Panc1 (cell line): ENCODE measurements at regions of chr4 and their contacts with region 1.

Region 1: GRCh38 chr4:181819946-181820345 is 423.3 kb upstream of the TENM3 start:
- DNase-seq: no peak
- ATAC-seq: no peak
- H3K4me3 ChIP-seq: no peak overlapping the region
- H3K27ac ChIP-seq: no peak overlapping the region
- H3K4me1 ChIP-seq: no peaks in the 10 kb centered on the region
- H3K27me3 ChIP-seq: no peaks in the 10 kb centered on the region
- CTCF ChIP-seq: no peak

Region 2: DNA sequence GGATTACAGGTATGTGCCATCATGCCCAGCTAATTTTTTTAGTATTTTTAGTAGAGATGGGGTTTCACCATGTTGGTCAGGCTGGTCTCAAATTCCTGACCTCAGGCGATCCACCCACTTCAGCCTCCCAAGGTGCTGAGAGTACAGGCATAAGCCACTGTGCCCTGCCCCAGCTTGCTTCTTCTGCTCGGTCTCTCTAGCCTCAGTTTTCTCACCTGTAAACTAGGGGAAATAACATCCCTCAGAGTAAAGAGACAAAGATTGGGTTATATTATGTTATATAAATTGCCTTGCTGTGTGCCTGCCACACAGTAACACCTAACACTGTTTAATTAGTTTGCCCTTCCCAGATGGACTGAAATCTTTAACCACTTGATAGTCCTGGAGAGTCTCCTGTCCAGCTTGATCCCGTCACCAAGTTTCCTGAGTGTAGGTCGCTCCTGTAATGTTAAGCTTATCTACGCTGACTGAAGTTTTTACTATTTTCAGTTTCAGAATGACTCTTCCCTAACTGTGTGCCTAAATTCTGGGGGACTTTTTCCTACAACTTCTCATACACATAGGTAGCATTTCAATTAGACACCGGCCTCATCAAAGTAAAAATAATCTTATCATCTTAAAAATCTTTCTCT is 10.6 kb after region 1 on chr4:
- CTCF ChIA-PET with region 1: no interaction called
- POLR2A ChIA-PET with region 1: no interaction called
- in situ Hi-C with region 1: no loop called
- intact Hi-C with region 1: no loop called
- DNase-seq: no peak
- ATAC-seq: no peak
- H3K4me3 ChIP-seq: no peak overlapping the region
- H3K27ac ChIP-seq: no peak overlapping the region
- H3K4me1 ChIP-seq: no peaks in the 10 kb centered on the region
- H3K27me3 ChIP-seq: no peaks in the 10 kb centered on the region
- CTCF ChIP-seq: no peak

Region 3: DNA sequence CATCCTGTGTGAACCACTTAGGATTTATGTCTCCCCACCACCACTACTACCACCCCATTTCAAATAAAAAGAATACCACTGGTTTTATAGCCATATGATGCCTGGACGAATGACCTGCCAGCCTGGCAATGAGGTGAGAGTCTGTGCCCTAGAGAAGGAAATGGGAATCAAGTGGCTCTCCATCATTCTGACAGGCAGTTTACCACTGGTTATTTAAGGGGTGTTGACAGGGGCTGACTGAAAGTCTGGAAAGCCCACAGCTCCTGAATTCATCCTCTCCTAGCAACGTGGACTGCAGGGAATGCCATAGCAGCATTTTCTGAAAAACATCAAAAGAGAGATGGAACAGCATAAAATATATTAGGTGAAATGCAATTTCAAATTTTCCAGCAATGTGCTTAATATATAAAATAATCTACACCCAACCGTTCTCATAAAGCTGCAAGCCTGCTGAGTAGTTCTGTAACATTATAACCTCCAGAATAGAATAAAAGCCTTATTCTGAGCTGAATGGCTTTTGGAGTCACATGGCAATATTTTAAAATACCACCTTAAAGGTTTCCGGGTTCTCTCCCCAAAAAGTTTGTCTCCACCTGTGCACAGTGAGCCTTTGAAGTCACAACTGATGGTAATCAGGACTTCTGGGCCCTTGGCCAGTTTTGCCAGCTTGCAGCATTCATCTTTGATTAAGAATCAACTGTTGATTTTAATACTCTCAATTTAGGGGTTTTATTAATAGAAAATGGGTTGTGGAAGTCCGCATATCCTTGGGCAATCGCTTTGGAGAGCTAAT is 975.7 kb after region 1 on chr4:
- CTCF ChIA-PET with region 1: no interaction called
- POLR2A ChIA-PET with region 1: no interaction called
- in situ Hi-C with region 1: no loop called
- intact Hi-C with region 1: loop called (anchors 5 kb)
- DNase-seq: no peak
- ATAC-seq: no peak
- H3K4me3 ChIP-seq: no peak overlapping the region
- H3K27ac ChIP-seq: no peak overlapping the region
- H3K4me1 ChIP-seq: no peaks in the 10 kb centered on the region
- H3K27me3 ChIP-seq: no peaks in the 10 kb centered on the region
- CTCF ChIP-seq: no peak